ENCODE measurements at regions of chr1 and their contacts with region 1.

Region 1: DNA sequence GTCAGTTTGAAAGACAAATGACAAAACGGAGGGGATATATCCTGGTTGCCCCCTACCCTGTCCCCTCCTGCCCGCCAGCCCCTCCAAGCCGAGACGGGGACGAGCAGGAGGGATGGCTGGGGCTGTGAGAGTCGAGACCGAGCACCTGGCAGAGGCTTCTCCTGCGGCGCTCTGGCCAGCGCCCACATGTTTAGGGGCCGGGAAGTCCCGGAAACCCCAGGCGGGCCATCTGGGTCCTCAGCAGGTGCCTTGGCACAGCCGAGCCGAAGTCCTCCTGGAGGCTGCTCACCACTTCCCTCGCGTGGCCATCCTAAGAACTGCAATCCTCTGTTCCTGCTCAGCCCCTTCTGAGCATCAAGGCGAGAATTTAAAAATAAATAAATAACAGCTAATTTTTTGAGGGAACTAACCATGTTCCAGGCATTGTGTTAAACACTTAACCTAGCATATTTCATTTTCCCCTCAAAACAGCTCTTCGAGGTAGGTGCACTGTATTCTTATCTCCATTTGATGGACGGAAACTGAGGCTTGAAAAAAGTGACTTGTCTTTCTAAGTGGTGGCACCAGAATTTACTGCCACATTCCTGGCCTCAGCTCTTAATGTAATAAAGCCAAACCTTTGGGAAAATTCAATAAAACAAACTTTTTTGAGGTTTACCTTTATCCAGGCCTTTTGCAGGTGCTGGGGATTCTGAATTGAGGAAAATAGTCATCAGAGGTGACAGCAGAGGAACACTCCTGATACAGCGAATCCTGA is 3.5 kb upstream of the RIMS3 start:
- DNase-seq: peak; percentile 44
- ATAC-seq: peak; percentile 51
- H3K4me3 ChIP-seq: peak overlapping the region in 2 of 3 experiments; percentile 32 to 53; a peak in 3 of 6 replicates
- H3K27ac ChIP-seq: no peak overlapping the region
- H3K4me1 ChIP-seq: peaks cover 25% of the 10 kb centered on the region
- H3K27me3 ChIP-seq: no peaks in the 10 kb centered on the region; a peak in 2 of 5 replicates
- CTCF ChIP-seq: peak; percentile 81
- EP300 ChIP-seq: no peak
- POLR2A ChIP-seq: no peak
- RAD21 ChIP-seq: peak; percentile 82; the same call in 1 of the 2 replicates

Region 2: GRCh38 chr1:40531381-40532061 is 137.4 kb before region 1 on chr1 and contains the start of gene ZNF684:
- CTCF ChIA-PET with region 1: no interaction called
- POLR2A ChIA-PET with region 1: no interaction called
- in situ Hi-C with region 1: no loop called
- intact Hi-C with region 1: no loop called
- DNase-seq: peak; percentile 96
- ATAC-seq: peak; percentile 95
- H3K4me3 ChIP-seq: peak within 1 kb of the TSS; percentile 78 to 94 (median 85)
- H3K27ac ChIP-seq: peak within 1 kb of the TSS; percentile 82
- H3K4me1 ChIP-seq: peaks cover 46% of the 10 kb centered on the region
- H3K27me3 ChIP-seq: no peaks in the 10 kb centered on the region; a peak in 1 of 5 replicates
- CTCF ChIP-seq: no peak
- EP300 ChIP-seq: peak in 1 of 2 experiments; percentile 48; a peak in 2 of 4 replicates
- POLR2A ChIP-seq: peak; percentile 74 to 76
- RAD21 ChIP-seq: no peak
- total RNA-seq, gene ZNF684: 15.2 and 18.8 TPM in 2 replicates

Region 3: GRCh38 chr1:40612345-40612831 is 56.6 kb before region 1 on chr1:
- CTCF ChIA-PET with region 1: interaction called, 17 read pairs
- POLR2A ChIA-PET with region 1: no interaction called
- in situ Hi-C with region 1: loop called (anchors 10 kb)
- intact Hi-C with region 1: loop called (anchors 5 kb)
- DNase-seq: peak; percentile 55
- ATAC-seq: peak; percentile 95
- H3K4me3 ChIP-seq: peak overlapping the region in 1 of 3 experiments; percentile 40; a peak in 1 of 6 replicates
- H3K27ac ChIP-seq: no peak overlapping the region
- H3K4me1 ChIP-seq: peaks cover 5% of the 10 kb centered on the region; the same call in 1 of the 2 replicates
- H3K27me3 ChIP-seq: peaks cover 0 to 3% of the 10 kb centered on the region in 2 experiments; a peak in 1 of 5 replicates
- CTCF ChIP-seq: peak; percentile 93
- EP300 ChIP-seq: no peak
- POLR2A ChIP-seq: no peak
- RAD21 ChIP-seq: peak; percentile 74

Region 4: DNA sequence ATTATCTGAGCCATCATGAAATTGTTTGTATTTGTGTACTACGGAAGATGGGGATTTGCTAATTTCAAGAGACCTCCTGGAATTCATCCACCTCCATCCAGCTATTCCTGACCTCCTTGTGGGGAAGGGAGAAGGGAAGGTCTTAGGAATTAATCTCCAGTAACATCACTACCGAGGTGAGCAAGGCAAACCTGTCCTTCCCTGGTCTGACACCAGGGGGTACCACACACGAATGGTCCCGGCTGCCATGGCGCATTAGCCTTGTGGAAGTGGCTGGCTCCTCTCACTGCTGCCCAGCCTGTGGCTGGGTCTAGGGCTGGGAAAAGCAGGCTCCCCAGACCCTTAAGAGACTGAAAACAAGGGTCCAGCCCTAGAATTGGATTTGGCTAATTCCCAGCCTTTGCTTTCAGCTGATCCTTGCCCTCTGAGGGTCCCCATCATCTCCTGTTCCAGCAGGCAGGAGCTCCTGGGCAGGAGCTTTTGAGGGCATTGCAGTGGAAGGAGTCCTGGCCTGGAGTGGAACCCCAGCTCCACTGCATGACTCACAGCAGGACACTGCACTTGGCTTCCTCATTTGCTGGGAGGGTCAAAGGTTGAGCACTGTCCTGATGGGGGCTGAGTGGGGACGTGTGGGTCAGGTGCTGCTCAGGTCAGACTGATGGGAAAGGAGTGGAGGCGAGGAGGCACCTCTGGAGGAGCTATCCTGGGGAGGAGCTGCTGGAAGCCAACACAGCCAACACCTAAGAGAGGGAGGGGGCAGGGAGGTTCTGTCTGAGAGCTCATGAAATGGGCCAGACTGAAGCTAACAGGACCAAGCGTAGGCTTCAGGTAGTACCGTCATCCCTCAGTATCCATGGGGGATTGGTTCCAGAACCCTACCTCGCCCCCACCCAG is 38.2 kb before region 1 on chr1:
- CTCF ChIA-PET with region 1: interaction called, 25 read pairs
- POLR2A ChIA-PET with region 1: no interaction called
- in situ Hi-C with region 1: no loop called
- intact Hi-C with region 1: loop called (anchors 1 kb)
- DNase-seq: peak; percentile 41
- ATAC-seq: peak; percentile 96
- H3K4me3 ChIP-seq: no peak overlapping the region
- H3K27ac ChIP-seq: no peak overlapping the region
- H3K4me1 ChIP-seq: peaks cover 16% of the 10 kb centered on the region
- H3K27me3 ChIP-seq: no peaks in the 10 kb centered on the region
- CTCF ChIP-seq: peak; percentile 79
- EP300 ChIP-seq: no peak
- POLR2A ChIP-seq: no peak
- RAD21 ChIP-seq: peak; percentile 74

Measured in HepG2 (cell line).